ENCODE measurements at regions of chr15 and their contacts with region 1.

Region 1: GRCh38 chr15:92336419-92336987 is 57.2 kb upstream of the ST8SIA2 start:
- DNase-seq: no peak
- H3K4me3 ChIP-seq: no peak overlapping the region
- CTCF ChIP-seq: no peak
- POLR2A ChIP-seq: no peak

Region 2: GRCh38 chr15:91975241-91975978 is 361.1 kb before region 1 on chr15:
- intact Hi-C with region 1: no loop called
- DNase-seq: no peak
- H3K4me3 ChIP-seq: no peak overlapping the region
- CTCF ChIP-seq: no peak
- POLR2A ChIP-seq: no peak

Region 3: DNA sequence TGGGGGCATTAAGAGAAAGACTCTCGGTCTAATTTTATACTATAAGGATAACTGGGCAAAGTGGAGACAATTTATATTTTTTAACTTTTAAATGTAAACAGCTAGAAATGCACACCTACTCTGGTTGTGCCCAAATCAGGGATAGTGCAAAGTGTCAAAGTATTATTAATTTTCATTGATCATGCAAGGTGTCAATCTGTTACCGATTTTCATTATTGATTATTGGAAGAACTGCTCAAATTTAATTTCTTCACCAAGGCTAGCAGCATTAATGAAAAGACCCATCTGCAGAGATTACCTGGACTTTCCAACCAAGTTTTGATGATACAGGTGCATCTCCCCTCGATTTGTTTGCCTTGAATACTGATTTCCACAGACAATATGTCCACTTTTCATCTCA is 46.6 kb after region 1 on chr15:
- intact Hi-C with region 1: no loop called
- DNase-seq: no peak
- H3K4me3 ChIP-seq: no peak overlapping the region
- CTCF ChIP-seq: no peak
- POLR2A ChIP-seq: no peak

Region 4: GRCh38 chr15:92393071-92393979 is 56.8 kb after region 1 on chr15 and contains the start of gene ST8SIA2:
- intact Hi-C with region 1: no loop called
- DNase-seq: no peak
- H3K4me3 ChIP-seq: no peak within 1 kb of the TSS
- CTCF ChIP-seq: no peak
- POLR2A ChIP-seq: no peak
- total RNA-seq, gene ST8SIA2: 0.06 TPM in 1 of 4 donors, not detected in the others

Region 5: GRCh38 chr15:93617443-93617842 is 1280.9 kb after region 1 on chr15:
- intact Hi-C with region 1: no loop called
- DNase-seq: no peak
- H3K4me3 ChIP-seq: no peak overlapping the region
- CTCF ChIP-seq: no peak
- POLR2A ChIP-seq: no peak

Region 6: GRCh38 chr15:93709708-93710107 is 1373.2 kb after region 1 on chr15:
- intact Hi-C with region 1: loop called (anchors 5 kb)
- DNase-seq: no peak
- H3K4me3 ChIP-seq: no peak overlapping the region
- CTCF ChIP-seq: no peak
- POLR2A ChIP-seq: no peak

Measured in lower leg skin (tissue), 4 donors.